B cell (primary cell): ENCODE measurements at regions of chr2 and their contacts with region 1.

Region 1: DNA sequence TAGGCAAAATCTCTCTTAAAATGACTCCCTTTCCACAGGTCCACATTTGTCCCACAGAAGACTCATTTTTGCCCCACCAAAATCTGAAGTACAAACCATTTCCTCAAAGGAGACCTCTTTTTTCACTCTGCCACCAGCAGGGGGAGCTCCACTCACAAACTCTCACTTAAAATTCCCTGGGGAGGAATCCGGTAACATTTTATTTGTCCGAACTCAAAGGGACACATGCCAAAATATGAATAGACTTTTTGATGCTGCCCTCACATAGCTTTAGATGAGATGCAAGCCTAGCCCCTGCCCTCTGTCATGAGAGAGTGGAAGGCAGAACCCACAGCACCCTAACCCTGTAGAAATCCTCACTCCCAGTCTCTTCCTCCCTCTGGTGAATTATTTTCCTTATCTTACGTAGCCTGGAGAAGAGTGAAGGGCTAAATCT is 57.1 kb downstream of the RMDN2 start:
- DNase-seq: peak; percentile 79
- ATAC-seq: peak; percentile 49
- H3K4me3 ChIP-seq: peak overlapping the region in 3 of 5 experiments; percentile 2 to 34 (median 8)
- H3K4me3 Mint-ChIP-seq: peak overlapping the region; percentile 64
- H3K27ac ChIP-seq: no peak overlapping the region
- H3K27ac Mint-ChIP-seq: no peak overlapping the region
- H3K4me1 ChIP-seq: peaks cover 6% of the 10 kb centered on the region in 2 donors
- H3K4me1 Mint-ChIP-seq: peaks cover 6% of the 10 kb centered on the region
- H3K27me3 ChIP-seq: no peaks in the 10 kb centered on the region
- H3K27me3 Mint-ChIP-seq: no peaks in the 10 kb centered on the region
- CTCF ChIP-seq: peak; percentile 94

Region 2: GRCh38 chr2:37925063-37925897 is 56.9 kb before region 1 on chr2 and contains the start of gene RMDN2:
- CTCF ChIA-PET with region 1: interaction called, 3 read pairs
- POLR2A ChIA-PET with region 1: no interaction called
- intact Hi-C with region 1: loop called (anchors 2 kb)
- DNase-seq: peak; percentile 92
- ATAC-seq: peak; percentile 85
- H3K4me3 ChIP-seq: peak within 1 kb of the TSS; percentile 61 to 86 (median 81)
- H3K4me3 Mint-ChIP-seq: peak within 1 kb of the TSS; percentile 96
- H3K27ac ChIP-seq: peak within 1 kb of the TSS; percentile 84
- H3K27ac Mint-ChIP-seq: peak within 1 kb of the TSS; percentile 96
- H3K4me1 ChIP-seq: peaks cover 13 to 15% of the 10 kb centered on the region in 2 donors
- H3K4me1 Mint-ChIP-seq: peaks cover 34% of the 10 kb centered on the region
- H3K27me3 ChIP-seq: no peaks in the 10 kb centered on the region
- H3K27me3 Mint-ChIP-seq: peaks cover 7% of the 10 kb centered on the region
- CTCF ChIP-seq: peak; percentile 40
- total RNA-seq, gene RMDN2: 6.4 and 6.6 TPM in 2 replicates

Region 3: DNA sequence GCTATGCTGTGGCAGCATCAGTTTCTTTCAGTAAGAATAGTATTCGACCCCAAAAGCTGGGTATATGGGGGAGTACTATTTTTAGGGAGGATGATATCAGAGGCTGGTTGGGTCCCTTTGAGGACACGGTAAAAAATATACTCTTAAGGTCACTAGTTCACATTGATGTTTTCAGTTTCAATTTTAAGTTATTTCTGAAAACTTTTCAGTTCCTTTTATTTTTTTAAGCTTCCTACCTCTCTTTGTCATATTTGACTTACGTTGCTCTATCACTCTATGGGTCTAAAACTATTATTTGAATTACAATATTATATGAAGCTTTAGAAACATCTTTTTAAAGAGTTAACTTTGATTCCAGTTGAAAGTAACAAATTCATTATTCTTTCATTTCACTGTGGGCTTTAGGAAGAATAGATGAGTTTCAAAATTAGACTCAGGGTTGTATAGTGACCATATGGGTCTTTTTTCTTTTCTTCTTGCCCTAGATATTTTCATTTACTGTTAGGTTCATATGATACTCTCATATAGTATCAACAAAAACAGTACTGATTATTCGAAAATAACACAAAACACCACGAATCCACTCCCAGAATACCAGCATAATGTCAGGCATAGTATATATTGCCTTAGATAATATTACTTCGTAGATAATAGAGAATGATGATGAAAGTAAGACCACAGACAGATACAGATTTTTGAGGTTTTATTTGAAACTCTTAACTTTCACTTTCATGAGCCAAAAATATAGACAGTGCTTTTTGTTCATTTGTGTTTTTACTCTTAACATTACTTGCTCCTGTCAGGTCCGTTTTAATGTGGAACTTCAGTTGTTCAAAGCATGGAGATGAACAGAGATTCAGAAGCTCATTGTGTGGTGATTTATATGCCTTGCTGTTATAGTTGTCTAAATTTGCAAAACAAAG is 47.3 kb before region 1 on chr2:
- CTCF ChIA-PET with region 1: interaction called, 5 read pairs
- POLR2A ChIA-PET with region 1: no interaction called
- intact Hi-C with region 1: loop called (anchors 5 kb)
- DNase-seq: peak; percentile 53
- ATAC-seq: peak; percentile 83
- H3K4me3 ChIP-seq: peak overlapping the region in 3 of 5 experiments; percentile 29 to 60 (median 35)
- H3K4me3 Mint-ChIP-seq: peak overlapping the region; percentile 73
- H3K27ac ChIP-seq: peak overlapping the region; percentile 82 to 88
- H3K27ac Mint-ChIP-seq: peak overlapping the region; percentile 76
- H3K4me1 ChIP-seq: peaks cover 32 to 49% of the 10 kb centered on the region in 2 donors
- H3K4me1 Mint-ChIP-seq: peaks cover 73% of the 10 kb centered on the region
- H3K27me3 ChIP-seq: no peaks in the 10 kb centered on the region
- H3K27me3 Mint-ChIP-seq: no peaks in the 10 kb centered on the region
- CTCF ChIP-seq: no peak

Region 4: GRCh38 chr2:38115216-38116032 is 133.3 kb after region 1 on chr2:
- CTCF ChIA-PET with region 1: interaction called, 3 read pairs
- POLR2A ChIA-PET with region 1: no interaction called
- intact Hi-C with region 1: loop called (anchors 1 kb)
- DNase-seq: peak; percentile 66
- ATAC-seq: peak; percentile 47
- H3K4me3 ChIP-seq: no peak overlapping the region
- H3K4me3 Mint-ChIP-seq: no peak overlapping the region
- H3K27ac ChIP-seq: no peak overlapping the region
- H3K27ac Mint-ChIP-seq: no peak overlapping the region
- H3K4me1 ChIP-seq: no peaks in the 10 kb centered on the region
- H3K4me1 Mint-ChIP-seq: no peaks in the 10 kb centered on the region
- H3K27me3 ChIP-seq: no peaks in the 10 kb centered on the region
- H3K27me3 Mint-ChIP-seq: peaks cover 29% of the 10 kb centered on the region
- CTCF ChIP-seq: peak; percentile 98